ENCODE measurements at regions of chr2 and their contacts with region 1.

Region 1: GRCh38 chr2:85095094-85095493 is 38.1 kb upstream of the TCF7L1 start:
- DNase-seq: no peak
- ATAC-seq: peak; percentile 62; the same call in 1 of the 2 replicates
- H3K4me3 ChIP-seq: no peak overlapping the region
- H3K27ac ChIP-seq: no peak overlapping the region
- H3K4me1 ChIP-seq: no peaks in the 10 kb centered on the region
- H3K27me3 ChIP-seq: no peaks in the 10 kb centered on the region
- CTCF ChIP-seq: no peak

Region 2: DNA sequence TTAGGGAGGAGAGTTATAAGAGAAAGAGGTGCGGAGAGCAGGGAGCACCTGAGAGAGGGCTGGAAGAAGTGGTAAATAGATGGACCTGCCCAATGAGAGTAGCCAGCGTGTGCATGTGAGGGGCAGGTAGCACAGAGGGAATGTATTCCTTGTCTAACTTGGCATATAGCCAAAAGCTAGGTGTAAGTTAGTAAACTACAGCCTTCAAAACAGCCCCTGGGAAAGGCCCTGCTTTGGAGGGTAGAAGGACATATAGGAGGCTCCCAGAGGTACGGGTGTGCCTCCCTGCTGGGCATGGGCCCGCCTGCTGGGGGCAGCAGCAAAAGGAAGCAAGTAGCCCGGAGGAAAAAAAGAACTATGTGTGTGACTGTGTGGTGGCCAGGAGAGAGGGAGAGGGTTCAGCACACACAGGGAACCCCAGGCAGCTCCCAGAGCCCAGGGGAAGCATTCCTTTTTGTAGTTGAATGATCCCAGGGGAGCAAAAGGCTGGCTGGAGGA is 86.1 kb after region 1 on chr2:
- CTCF ChIA-PET with region 1: no interaction called
- POLR2A ChIA-PET with region 1: interaction called, 13 read pairs
- in situ Hi-C with region 1: no loop called
- intact Hi-C with region 1: no loop called
- DNase-seq: no peak
- ATAC-seq: peak; percentile 46; the same call in 1 of the 2 replicates
- H3K4me3 ChIP-seq: no peak overlapping the region
- H3K27ac ChIP-seq: no peak overlapping the region
- H3K4me1 ChIP-seq: peaks cover 9% of the 10 kb centered on the region
- H3K27me3 ChIP-seq: no peaks in the 10 kb centered on the region
- CTCF ChIP-seq: no peak

Region 3: GRCh38 chr2:85326406-85327159 is 231.5 kb after region 1 on chr2:
- CTCF ChIA-PET with region 1: no interaction called
- POLR2A ChIA-PET with region 1: no interaction called
- in situ Hi-C with region 1: no loop called
- intact Hi-C with region 1: no loop called
- DNase-seq: no peak
- ATAC-seq: no peak
- H3K4me3 ChIP-seq: peak overlapping the region; percentile 83 to 88
- H3K27ac ChIP-seq: peak overlapping the region; percentile 93
- H3K4me1 ChIP-seq: peaks cover 12% of the 10 kb centered on the region
- H3K27me3 ChIP-seq: no peaks in the 10 kb centered on the region
- CTCF ChIP-seq: no peak